Dendritic cell treated with granulocyte-macrophage colony-stimulating factor and Interleukin-4, amounts not matched to agents 40 ng/mL and 50 ng/mL, for 4 days (primary cell): ENCODE measurements at regions of chr17 and their contacts with region 1.

Region 1: DNA sequence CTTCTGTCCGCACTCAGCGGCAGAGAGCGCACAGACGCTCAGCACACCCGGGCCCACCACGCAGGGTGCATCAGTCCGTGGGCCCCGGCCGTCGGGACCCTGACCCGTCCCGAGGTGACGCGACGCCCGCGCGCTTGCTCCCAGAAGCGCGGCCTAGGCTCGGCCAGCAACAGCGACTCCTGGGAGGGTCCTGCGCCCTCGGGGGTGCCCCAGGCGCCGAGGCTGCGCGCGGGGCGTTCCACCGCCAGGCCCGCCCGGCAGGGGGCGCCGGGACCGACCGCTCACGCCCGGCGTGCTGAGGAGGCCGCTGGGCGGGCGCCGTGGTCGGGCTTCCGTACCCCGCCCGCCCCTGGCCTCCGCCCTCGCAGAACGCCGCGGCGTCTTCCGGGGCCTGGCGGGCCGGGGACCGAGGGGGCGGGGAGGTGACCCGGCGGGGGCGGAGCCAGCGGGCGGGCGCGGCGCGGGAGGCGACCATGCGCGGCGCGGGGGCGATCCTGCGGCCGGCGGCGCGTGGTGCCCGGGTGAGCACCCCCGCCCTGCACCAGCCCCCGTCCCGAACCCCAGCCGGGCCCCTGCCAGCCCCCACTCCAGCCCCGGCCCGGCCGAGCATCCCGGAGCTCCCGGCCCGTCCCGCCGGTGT is at the start of gene CISD3:
- H3K4me3 Mint-ChIP-seq: peak within 1 kb of the TSS; percentile 90
- H3K27ac Mint-ChIP-seq: peak within 1 kb of the TSS; percentile 89
- H3K4me1 Mint-ChIP-seq: peaks cover 86% of the 10 kb centered on the region
- H3K27me3 Mint-ChIP-seq: no peaks in the 10 kb centered on the region

Region 2: DNA sequence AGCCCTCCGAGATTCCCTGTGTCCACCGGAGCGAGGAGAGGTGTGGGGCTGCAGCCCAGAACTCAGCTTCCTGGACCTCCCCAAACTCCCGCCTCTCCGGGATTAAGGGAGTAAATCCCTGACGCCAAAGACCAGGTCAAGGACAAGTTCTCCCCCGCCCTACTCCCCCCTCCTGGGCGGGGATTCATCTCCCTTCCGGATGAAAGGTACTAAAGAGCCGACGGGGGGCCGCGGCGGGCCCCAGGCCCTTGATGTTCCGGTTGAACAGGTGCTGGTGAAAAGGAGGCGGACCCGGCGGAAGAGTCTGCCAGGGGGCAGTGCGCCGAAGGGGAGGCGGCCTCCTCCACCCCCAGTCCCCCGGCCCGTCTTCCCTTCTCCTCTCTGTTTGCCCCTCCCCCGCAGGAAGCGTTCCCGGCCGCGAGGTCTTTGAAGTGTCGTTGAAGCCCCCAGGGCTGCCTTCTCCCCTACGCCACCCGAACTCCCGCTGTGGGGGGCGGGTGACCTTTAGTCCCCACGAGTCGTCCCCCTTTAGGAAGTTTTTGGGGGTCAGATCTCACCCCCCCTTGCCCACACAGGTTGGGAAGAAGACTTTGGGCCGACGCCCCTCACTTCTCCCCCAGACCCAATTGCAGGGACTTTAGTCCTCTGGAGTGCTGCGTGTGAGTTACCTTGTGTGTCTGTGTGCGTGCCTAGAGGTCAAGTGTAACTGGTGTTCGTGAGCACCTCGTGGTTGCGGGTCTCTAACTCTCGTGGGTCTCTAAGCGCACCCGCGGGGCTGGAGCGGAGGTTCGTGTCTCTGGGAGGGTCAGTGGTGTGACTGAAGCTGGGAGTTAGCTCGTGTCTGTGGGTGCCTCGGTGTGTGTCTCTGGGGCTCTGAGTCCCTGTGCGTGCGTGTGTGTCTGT is 26.0 kb before region 1 on chr17:
- intact Hi-C with region 1: loop called (anchors 1 kb)
- H3K4me3 Mint-ChIP-seq: peak overlapping the region; percentile 97
- H3K27ac Mint-ChIP-seq: peak overlapping the region; percentile 100
- H3K4me1 Mint-ChIP-seq: peaks cover 54% of the 10 kb centered on the region
- H3K27me3 Mint-ChIP-seq: no peaks in the 10 kb centered on the region